Heart right ventricle (tissue), 16 donors: ENCODE measurements at regions of chr9 and their contacts with region 1.

Region 1: DNA sequence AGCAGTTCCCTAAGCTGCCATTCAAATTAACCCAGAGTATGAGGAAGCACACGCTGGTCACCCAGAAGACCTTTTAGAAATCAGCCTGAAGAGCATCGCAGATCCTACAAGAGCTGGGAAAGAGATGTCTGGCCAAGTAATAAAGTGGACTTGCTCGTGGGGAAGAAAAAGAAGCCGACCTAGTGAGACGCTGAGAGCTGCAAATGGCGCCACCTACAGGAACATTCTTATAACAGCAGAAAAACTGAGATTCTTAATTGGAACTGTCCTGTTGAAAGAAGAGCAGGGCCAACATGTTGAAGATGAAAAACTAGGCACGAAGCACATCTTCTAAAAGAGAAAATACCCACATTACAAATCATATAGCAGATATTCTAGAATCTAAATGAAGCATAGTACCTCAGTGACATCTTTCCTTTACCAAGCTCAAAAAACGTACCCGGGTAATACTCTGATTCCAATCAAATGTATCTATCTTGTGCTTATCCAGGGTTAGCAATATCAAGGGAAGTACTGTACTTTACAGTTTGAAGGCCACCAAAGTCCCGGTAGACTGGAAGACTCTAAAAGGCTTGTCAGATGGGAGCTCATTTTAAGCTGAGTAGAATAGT is 3.9 kb upstream of the GNAQ start:
- DNase-seq: peak in 1 of 2 donors; percentile 71
- ATAC-seq: peak in 6 of 8 donors; percentile 8 to 48 (median 30)
- H3K4me3 ChIP-seq: no peak overlapping the region
- H3K27ac ChIP-seq: peak overlapping the region in 5 of 10 donors; percentile 27 to 65 (median 37)
- H3K4me1 ChIP-seq: peaks cover 7 to 39% (median 21%) of the 10 kb centered on the region in 9 donors
- H3K27me3 ChIP-seq: no peaks in the 10 kb centered on the region
- CTCF ChIP-seq: peak; percentile 73 to 87 (median 81)

Region 2: DNA sequence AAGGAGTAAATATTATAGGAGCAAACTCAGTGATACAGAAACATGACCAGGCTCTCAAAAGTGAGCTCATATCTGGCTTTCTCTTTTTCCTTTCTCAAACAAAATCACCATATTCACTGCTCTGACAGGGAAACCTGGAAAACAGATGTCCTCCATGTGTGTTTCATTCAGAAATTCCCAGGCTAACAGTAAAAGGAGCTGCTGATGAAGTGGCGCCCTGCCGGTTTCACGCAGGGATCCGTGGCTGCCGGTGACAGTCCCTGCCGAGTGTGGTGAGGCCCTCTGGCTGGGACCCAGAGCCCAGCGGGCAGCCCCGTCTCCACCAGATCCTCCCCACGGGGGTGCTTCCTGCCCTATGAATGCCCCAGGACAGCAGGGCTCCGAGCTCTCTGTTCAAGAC is 595.4 kb before region 1 on chr9:
- intact Hi-C with region 1: loop called in 3 of 10 experiments (anchors 10 kb)
- DNase-seq: no peak
- ATAC-seq: peak in 7 of 8 donors; percentile 41 to 71 (median 54)
- H3K4me3 ChIP-seq: peak overlapping the region in 1 of 10 donors; percentile 1
- H3K27ac ChIP-seq: peak overlapping the region in 2 of 10 donors; percentile 42 to 45
- H3K4me1 ChIP-seq: peaks cover 0 to 11% (median 0%) of the 10 kb centered on the region in 9 donors
- H3K27me3 ChIP-seq: peaks cover 0 to 4% (median 0%) of the 10 kb centered on the region in 7 donors
- CTCF ChIP-seq: no peak

Region 3: GRCh38 chr9:77648234-77649120 is 387.0 kb before region 1 on chr9 and contains the start of gene GNA14:
- intact Hi-C with region 1: loop called in 1 of 10 experiments (anchors 10 kb)
- DNase-seq: peak; percentile 60 to 66
- ATAC-seq: peak; percentile 77 to 91 (median 82)
- H3K4me3 ChIP-seq: peak within 1 kb of the TSS; percentile 15 to 74 (median 62)
- H3K27ac ChIP-seq: peak within 1 kb of the TSS in 8 of 10 donors; percentile 54 to 84 (median 68)
- H3K4me1 ChIP-seq: peaks cover 0 to 34% (median 11%) of the 10 kb centered on the region in 9 donors
- H3K27me3 ChIP-seq: peaks cover 0 to 39% (median 15%) of the 10 kb centered on the region in 7 donors
- CTCF ChIP-seq: peak in 2 of 9 donors; percentile 27 to 28
- total RNA-seq, gene GNA14: 0.93 to 4.8 (median 1.8) TPM

Region 4: GRCh38 chr9:77841739-77842386 is 193.6 kb before region 1 on chr9:
- intact Hi-C with region 1: loop called in 5 of 10 experiments (anchors 2 to 10 kb)
- DNase-seq: no peak
- ATAC-seq: no peak
- H3K4me3 ChIP-seq: no peak overlapping the region
- H3K27ac ChIP-seq: no peak overlapping the region
- H3K4me1 ChIP-seq: peaks cover 0 to 61% (median 26%) of the 10 kb centered on the region in 9 donors
- H3K27me3 ChIP-seq: no peaks in the 10 kb centered on the region
- CTCF ChIP-seq: peak in 6 of 9 donors; percentile 17 to 54 (median 30)

Region 5: DNA sequence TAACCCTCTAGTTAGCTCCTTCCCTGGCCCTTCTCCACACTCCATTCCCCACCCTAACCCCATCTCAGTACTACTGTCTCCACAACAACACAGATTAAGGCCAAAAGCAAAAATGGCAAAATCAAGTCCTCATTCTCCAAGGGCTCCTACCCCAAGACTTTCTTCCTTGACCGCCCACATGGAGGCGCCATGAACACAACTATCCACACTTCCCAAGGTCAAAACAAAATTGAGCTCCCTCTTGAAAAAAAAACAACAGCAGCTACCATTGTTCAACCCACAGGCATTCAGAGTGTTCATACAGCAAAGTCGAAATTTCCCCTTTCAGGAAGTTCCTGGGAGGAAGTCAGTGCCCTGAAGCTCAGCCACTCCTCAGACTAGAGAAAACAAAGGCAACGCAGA is 58.3 kb before region 1 on chr9:
- intact Hi-C with region 1: loop called in 5 of 10 experiments (anchors 1 to 10 kb)
- DNase-seq: peak; percentile 65 to 66
- ATAC-seq: peak; percentile 80 to 93 (median 86)
- H3K4me3 ChIP-seq: no peak overlapping the region
- H3K27ac ChIP-seq: peak overlapping the region in 7 of 10 donors; percentile 28 to 80 (median 63)
- H3K4me1 ChIP-seq: peaks cover 0 to 68% (median 46%) of the 10 kb centered on the region in 9 donors
- H3K27me3 ChIP-seq: no peaks in the 10 kb centered on the region
- CTCF ChIP-seq: peak in 8 of 9 donors; percentile 29 to 73 (median 61)

Region 6: DNA sequence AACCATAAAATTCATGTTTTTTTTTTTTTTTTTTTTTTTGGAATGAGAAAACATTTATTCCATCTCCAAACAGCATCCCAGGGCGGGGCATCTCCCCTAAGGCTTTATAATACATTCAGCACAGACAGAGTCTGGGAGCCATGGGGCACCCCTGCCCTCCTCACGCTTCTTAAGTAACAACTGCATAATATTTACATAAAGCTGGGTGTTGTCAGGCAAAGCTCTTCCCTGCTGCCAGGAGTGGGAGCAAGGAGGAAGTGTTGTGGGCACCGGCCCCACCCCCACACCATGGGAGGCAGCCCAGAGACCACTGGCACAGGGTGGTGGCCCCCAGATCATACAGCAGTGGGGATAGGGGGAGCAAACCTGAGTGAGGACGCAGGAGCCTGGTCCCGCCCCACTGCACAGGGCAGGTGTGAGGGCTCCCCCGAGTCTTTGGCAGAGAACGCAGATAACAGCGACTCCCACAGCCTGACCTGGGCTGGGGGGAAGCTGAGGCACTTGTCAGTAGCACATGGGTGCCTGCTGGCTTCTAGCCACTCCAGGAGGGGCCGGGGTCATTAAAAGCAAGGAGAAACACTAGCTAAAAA is 114.3 kb after region 1 on chr9:
- intact Hi-C with region 1: no loop called
- DNase-seq: no peak
- ATAC-seq: no peak
- H3K4me3 ChIP-seq: no peak overlapping the region
- H3K27ac ChIP-seq: no peak overlapping the region
- H3K4me1 ChIP-seq: peaks cover 0 to 5% (median 0%) of the 10 kb centered on the region in 9 donors
- H3K27me3 ChIP-seq: no peaks in the 10 kb centered on the region
- CTCF ChIP-seq: no peak